ENCODE measurements at regions of chr14 and their contacts with region 1.

Region 1: DNA sequence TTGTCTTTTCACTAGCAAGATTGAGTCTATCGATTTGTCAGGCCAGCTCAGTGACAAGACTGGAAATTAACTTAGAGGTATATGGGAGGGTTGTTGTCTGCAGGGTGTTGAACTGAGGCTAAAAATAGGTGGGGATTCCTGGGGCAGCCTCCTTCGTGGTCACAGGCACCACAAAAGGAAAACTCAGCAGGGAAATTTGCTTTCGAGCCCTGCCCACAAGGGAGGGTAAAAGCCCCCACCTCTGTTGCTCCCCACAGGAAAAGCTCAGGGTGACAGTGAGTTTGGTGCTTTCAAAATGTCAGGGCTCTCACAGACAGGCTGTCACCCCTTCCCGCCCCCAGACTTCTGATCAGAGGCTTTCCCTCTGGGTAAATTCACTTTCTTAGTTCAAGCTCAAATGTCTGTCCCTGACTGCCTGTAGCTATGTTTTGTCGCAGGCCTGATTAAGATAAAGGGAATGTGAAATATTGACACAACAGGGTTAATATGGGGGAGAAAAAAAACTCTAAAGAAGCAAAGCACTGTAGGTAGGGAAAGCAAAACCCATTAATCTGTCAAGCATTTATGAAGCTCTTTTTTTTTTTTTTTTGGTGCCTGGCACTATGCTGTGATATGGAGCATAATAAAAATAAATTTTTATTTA is 11.7 kb upstream of the NFKBIA start:
- DNase-seq: no peak
- ATAC-seq: no peak
- H3K4me3 ChIP-seq: no peak overlapping the region
- H3K27ac ChIP-seq: peak overlapping the region; percentile 10
- H3K4me1 ChIP-seq: peaks cover 4% of the 10 kb centered on the region
- H3K27me3 ChIP-seq: no peaks in the 10 kb centered on the region

Region 2: DNA sequence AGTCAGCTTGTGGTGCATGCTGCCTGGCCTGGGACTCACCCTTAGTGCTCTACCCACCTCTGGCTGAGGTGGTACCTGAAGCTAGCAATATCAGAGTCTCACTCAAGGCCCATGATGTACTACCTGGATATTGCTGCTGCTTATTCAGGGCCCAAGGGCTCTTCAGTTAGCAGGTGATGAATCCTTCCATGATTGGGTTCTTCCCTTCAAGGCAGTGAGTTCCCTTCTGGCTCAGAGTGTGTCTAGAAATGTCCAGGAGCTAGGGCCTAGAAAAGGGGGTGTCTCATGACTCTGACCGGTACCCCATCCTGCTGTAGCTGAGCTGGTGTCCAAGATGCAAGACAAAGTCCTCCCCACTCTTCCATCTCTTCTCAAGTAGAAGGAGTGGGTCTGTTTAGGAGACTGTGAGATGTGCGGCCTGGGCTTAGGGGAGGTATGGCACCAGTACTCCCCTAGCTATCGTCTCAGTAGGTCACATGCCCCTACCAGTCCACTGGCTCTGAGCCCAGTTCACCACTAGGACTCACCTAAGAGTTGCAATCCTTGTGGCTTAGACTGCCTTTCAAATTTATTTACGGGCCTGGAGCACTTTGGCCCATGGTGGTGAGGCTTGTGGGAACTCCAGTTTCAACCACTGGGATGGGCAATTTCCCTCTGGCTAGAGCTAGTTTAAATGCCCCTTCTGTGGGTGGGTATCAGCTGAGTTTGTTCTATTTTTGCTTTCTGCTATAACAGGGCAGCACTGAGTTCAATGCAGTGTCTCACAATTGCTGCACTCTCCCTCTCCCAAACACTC is 281.7 kb before region 1 on chr14:
- intact Hi-C with region 1: loop called in 3 of 4 experiments (anchors 2 to 10 kb)
- DNase-seq: no peak
- ATAC-seq: no peak
- H3K4me3 ChIP-seq: no peak overlapping the region
- H3K27ac ChIP-seq: no peak overlapping the region
- H3K4me1 ChIP-seq: peaks cover 5% of the 10 kb centered on the region
- H3K27me3 ChIP-seq: no peaks in the 10 kb centered on the region

Region 3: DNA sequence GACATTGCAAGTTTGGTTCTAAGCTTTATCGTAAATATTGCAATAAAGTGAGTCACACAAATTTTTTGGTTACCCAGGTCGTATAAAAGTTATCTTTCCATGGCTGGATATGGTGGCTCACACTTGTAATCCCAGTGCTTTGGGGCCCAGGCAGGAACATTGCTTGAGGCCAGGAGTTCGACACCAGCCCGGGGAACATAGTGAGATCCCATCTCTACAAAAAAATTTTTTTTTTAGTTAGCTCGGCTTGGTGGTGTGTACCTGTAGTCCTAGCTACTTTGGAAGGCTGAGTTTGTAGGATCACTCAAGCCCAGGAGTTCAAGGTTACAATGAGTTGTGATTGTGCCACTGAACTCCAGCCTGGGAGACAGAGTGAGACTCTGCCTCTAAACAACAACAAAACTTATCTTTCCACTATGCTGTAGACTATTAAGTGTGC is 269.5 kb before region 1 on chr14:
- intact Hi-C with region 1: loop called in 2 of 4 experiments (anchors 5 kb)
- DNase-seq: no peak
- ATAC-seq: no peak
- H3K4me3 ChIP-seq: no peak overlapping the region
- H3K27ac ChIP-seq: no peak overlapping the region
- H3K4me1 ChIP-seq: no peaks in the 10 kb centered on the region
- H3K27me3 ChIP-seq: no peaks in the 10 kb centered on the region

Region 4: DNA sequence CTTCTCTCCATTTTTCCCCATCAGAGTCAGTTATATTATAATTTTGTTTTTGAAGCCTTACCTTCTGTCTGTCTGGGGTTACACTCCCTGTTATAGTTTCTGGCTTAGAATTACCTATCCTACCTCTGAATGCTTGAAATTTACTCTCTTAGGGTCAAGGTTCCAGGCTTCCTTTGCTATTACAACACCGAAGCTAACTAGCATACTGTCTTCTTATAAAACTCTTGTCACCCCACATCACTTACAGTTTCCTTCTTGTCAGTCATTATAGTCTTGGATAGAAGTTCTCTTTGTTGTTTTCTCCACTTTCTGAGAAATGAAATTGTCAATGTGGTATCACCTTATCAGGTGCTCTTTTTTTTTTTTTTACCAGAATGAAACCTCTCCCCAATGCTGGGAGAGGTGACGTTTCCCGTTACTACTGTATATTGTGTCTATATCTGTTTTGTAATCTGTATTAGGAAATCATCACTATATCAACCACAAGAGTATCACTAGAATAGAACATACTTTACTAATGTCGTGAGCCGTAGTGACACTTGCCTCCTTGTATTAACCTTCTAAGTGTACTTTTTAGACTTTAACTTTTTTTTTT is 193.3 kb before region 1 on chr14:
- intact Hi-C with region 1: loop called in 3 of 4 experiments (anchors 5 to 10 kb)
- DNase-seq: no peak
- ATAC-seq: no peak
- H3K4me3 ChIP-seq: no peak overlapping the region
- H3K27ac ChIP-seq: no peak overlapping the region
- H3K4me1 ChIP-seq: peaks cover 3% of the 10 kb centered on the region
- H3K27me3 ChIP-seq: no peaks in the 10 kb centered on the region

Region 5: DNA sequence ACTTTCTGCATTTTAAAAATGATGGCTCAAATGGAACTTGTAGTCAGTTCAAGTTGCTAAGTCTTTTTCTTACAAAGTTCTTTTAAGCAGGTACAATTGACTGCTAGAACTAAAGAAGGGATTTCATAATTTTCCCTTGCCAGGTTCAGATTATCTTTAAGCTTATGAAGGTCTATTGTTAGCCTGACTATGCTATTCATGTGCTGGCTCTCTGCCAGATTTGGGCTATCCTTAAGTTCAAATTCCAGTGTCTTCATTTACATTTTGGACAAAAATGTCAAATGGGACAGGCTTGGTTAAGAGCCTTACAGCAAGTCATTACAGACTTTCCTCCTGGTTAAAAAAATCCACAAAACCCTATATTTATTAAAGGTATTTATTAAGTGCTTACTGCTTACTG is 160.0 kb after region 1 on chr14:
- intact Hi-C with region 1: no loop called
- DNase-seq: no peak
- ATAC-seq: no peak
- H3K4me3 ChIP-seq: no peak overlapping the region
- H3K27ac ChIP-seq: no peak overlapping the region
- H3K4me1 ChIP-seq: no peaks in the 10 kb centered on the region
- H3K27me3 ChIP-seq: no peaks in the 10 kb centered on the region

Measured in right cardiac atrium (tissue), 5 donors.